Activated B cell treated with CpG ODN at 0.5 μM for 24 hours (primary cell): ENCODE measurements at regions of chr6 and their contacts with region 1.

Region 1: DNA sequence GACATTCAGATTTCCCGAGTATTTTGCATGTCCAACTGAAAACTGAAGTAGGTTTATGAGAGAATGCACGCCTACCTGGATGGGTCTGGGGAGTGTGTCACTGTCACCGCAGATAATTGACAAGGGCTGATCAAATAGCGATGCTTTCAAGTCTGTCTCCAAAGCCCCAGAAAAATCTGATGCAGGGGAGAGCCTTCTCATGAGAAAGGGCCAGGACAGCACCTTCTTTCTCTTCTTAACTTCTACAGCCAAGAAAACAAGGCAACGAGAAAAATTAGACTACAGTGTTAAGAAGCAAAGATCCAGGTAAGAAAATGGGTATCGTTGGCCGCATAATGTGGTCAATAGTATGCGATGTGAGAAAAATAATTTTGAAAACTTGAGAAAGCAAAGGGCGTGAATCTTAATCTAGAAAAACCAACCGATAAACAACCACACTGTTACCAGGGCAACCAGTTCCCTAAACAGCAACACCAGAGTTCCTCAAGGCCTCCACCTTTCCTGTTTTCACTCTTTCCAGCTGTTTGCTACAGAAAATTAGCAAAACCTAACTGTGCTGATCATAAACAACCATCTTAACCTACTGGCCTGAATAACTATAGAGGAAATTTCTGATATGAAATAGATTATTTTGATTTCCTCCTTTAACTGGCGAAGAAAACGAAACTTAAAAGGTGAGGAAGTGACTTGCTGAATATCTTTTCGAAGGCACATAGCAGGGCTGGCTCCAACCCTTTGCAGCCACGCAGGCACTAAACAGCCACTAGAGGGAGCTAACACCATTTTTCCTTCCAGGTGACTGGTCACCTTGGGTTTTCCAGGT is 2.6 kb downstream of the TAGAP start:
- DNase-seq: no peak
- ATAC-seq: peak; percentile 34
- H3K4me3 Mint-ChIP-seq: peak overlapping the region; percentile 99
- H3K27ac Mint-ChIP-seq: peak overlapping the region; percentile 100
- H3K4me1 Mint-ChIP-seq: peaks cover 76% of the 10 kb centered on the region
- H3K27me3 Mint-ChIP-seq: no peaks in the 10 kb centered on the region
- CTCF ChIP-seq: peak; percentile 91

Region 2: GRCh38 chr6:158737710-158738615 is 304.3 kb before region 1 on chr6:
- CTCF ChIA-PET with region 1: no interaction called
- POLR2A ChIA-PET with region 1: no interaction called
- intact Hi-C with region 1: no loop called
- DNase-seq: no peak
- ATAC-seq: no peak
- H3K4me3 Mint-ChIP-seq: no peak overlapping the region
- H3K27ac Mint-ChIP-seq: no peak overlapping the region
- H3K4me1 Mint-ChIP-seq: no peaks in the 10 kb centered on the region
- H3K27me3 Mint-ChIP-seq: no peaks in the 10 kb centered on the region
- CTCF ChIP-seq: no peak

Region 3: DNA sequence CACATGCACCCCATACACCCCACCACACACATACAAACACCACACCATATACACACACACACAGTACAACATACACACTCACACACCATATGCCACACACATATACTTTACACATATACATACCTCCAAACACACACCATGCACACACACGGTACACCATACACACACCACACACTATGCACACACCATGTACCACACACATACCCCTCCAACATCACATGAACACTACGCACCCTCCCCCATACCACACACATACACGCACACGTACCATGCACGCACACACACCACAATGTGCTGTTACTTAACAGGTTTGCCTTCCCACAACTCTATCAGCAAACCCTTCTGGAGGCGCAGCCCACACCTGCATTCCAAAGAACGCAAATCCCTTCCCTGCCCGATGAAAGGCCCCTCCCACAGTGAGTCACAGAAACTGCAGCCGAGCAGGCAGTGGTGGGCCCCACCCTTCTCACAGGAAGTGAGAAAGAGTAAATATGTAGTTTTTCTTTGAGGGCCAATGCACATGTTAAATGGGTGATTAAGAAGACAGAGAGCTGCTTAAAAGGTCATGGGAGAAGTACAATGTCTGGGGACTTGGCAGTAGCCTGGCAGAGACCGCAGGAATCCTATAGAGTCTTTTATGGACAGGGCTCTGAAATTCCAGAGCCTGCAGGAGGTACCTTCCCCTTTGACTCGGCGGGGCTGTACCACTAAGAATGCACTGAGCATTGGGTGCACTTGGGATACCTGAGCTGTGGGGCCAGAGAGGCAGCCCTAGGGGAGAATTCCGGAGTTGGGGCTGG is 188.9 kb before region 1 on chr6:
- CTCF ChIA-PET with region 1: no interaction called
- POLR2A ChIA-PET with region 1: no interaction called
- intact Hi-C with region 1: loop called (anchors 5 kb)
- DNase-seq: peak; percentile 68
- ATAC-seq: peak; percentile 87
- H3K4me3 Mint-ChIP-seq: no peak overlapping the region
- H3K27ac Mint-ChIP-seq: no peak overlapping the region
- H3K4me1 Mint-ChIP-seq: peaks cover 26% of the 10 kb centered on the region
- H3K27me3 Mint-ChIP-seq: no peaks in the 10 kb centered on the region
- CTCF ChIP-seq: no peak

Region 4: GRCh38 chr6:159017757-159018559 is 24.3 kb before region 1 on chr6:
- CTCF ChIA-PET with region 1: interaction called, 113 read pairs
- POLR2A ChIA-PET with region 1: interaction called, 128 read pairs
- intact Hi-C with region 1: loop called (anchors 1 kb)
- DNase-seq: no peak
- ATAC-seq: peak; percentile 34
- H3K4me3 Mint-ChIP-seq: no peak overlapping the region
- H3K27ac Mint-ChIP-seq: peak overlapping the region; percentile 50
- H3K4me1 Mint-ChIP-seq: peaks cover 37% of the 10 kb centered on the region
- H3K27me3 Mint-ChIP-seq: no peaks in the 10 kb centered on the region
- CTCF ChIP-seq: no peak

Region 5: DNA sequence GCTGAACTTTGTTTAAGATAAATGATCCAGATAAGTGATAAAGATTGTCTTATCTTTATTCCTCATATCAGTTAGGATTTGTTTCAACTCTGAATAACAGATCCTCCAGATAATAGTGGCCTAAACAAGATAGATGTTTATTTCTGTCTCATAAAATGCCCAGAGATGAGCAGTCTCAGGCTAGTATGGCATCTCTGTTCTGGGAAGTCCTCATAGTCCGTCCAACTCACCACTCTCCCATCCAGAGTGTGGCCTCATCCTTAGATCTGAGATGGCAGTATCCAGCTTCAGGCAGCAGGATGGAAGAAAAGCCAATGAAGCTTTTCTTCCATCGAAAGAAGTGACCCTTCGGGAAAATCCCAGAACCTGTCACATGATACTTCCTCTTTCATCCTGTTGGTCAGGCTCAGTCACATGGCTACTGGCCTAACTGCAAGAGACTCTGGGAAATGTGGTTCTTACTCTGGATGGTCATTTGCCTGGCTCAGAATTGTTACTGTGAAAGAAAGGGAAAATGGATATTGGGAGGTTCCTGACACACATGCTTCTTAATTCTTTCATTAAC is 32.0 kb after region 1 on chr6:
- CTCF ChIA-PET with region 1: interaction called, 4 read pairs
- POLR2A ChIA-PET with region 1: interaction called, 174 read pairs
- intact Hi-C with region 1: no loop called
- DNase-seq: no peak
- ATAC-seq: no peak
- H3K4me3 Mint-ChIP-seq: peak overlapping the region; percentile 70
- H3K27ac Mint-ChIP-seq: peak overlapping the region; percentile 36
- H3K4me1 Mint-ChIP-seq: peaks cover 41% of the 10 kb centered on the region
- H3K27me3 Mint-ChIP-seq: no peaks in the 10 kb centered on the region
- CTCF ChIP-seq: no peak

Region 6: GRCh38 chr6:159104163-159104925 is 62.1 kb after region 1 on chr6:
- CTCF ChIA-PET with region 1: interaction called, 99 read pairs
- POLR2A ChIA-PET with region 1: interaction called, 1,007 read pairs
- intact Hi-C with region 1: loop called (anchors 1 kb)
- DNase-seq: peak; percentile 76
- ATAC-seq: peak; percentile 50
- H3K4me3 Mint-ChIP-seq: peak overlapping the region; percentile 67
- H3K27ac Mint-ChIP-seq: peak overlapping the region; percentile 98
- H3K4me1 Mint-ChIP-seq: peaks cover 91% of the 10 kb centered on the region
- H3K27me3 Mint-ChIP-seq: no peaks in the 10 kb centered on the region
- CTCF ChIP-seq: no peak

Region 7: GRCh38 chr6:159134701-159135364 is 92.6 kb after region 1 on chr6:
- CTCF ChIA-PET with region 1: interaction called, 115 read pairs
- POLR2A ChIA-PET with region 1: interaction called, 35 read pairs
- intact Hi-C with region 1: loop called (anchors 1 kb)
- DNase-seq: peak; percentile 63
- ATAC-seq: peak; percentile 98
- H3K4me3 Mint-ChIP-seq: peak overlapping the region; percentile 61
- H3K27ac Mint-ChIP-seq: peak overlapping the region; percentile 80
- H3K4me1 Mint-ChIP-seq: peaks cover 20% of the 10 kb centered on the region
- H3K27me3 Mint-ChIP-seq: peaks cover 4% of the 10 kb centered on the region
- CTCF ChIP-seq: peak; percentile 72